ENCODE measurements at regions of chr20 and their contacts with region 1.

Region 1: DNA sequence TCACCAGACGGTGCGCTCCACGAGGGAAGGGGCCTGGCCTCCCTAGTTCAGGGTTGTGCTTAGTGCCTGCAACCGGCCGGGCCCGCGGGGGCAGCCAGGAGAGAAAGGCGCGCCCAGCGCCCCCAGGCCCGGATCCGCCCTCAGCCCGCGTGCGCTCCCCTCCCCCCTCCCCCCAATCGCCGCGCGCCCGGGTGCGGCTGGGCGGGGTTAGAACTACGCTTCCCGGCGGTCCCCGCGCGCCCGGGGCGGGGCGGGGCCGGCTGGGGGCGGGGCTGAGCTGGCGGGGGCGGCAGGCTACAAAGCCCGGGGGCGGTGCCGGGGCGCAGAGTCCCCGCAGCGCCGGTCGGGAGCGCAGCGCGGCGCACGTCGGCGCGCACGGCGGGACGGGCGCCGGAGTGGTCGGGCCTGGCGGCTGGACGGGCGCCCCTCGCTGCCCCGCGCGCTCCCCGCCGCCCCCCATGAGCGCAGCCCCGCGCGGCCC is at the start of gene RBM38:
- DNase-seq: peak; percentile 50 to 86 (median 74)
- ATAC-seq: peak; percentile 54
- H3K4me3 ChIP-seq: peak within 1 kb of the TSS; percentile 97 to 98
- H3K4me3 Mint-ChIP-seq: peak within 1 kb of the TSS; percentile 99
- H3K27ac ChIP-seq: peak within 1 kb of the TSS; percentile 90 to 97
- H3K27ac Mint-ChIP-seq: peak within 1 kb of the TSS; percentile 98
- H3K4me1 ChIP-seq: peaks cover 53% of the 10 kb centered on the region
- H3K4me1 Mint-ChIP-seq: peaks cover 45% of the 10 kb centered on the region
- H3K27me3 ChIP-seq: no peaks in the 10 kb centered on the region
- H3K27me3 Mint-ChIP-seq: no peaks in the 10 kb centered on the region
- CTCF ChIP-seq: no peak
- total RNA-seq, gene RBM38: 739 to 743 TPM

Region 2: DNA sequence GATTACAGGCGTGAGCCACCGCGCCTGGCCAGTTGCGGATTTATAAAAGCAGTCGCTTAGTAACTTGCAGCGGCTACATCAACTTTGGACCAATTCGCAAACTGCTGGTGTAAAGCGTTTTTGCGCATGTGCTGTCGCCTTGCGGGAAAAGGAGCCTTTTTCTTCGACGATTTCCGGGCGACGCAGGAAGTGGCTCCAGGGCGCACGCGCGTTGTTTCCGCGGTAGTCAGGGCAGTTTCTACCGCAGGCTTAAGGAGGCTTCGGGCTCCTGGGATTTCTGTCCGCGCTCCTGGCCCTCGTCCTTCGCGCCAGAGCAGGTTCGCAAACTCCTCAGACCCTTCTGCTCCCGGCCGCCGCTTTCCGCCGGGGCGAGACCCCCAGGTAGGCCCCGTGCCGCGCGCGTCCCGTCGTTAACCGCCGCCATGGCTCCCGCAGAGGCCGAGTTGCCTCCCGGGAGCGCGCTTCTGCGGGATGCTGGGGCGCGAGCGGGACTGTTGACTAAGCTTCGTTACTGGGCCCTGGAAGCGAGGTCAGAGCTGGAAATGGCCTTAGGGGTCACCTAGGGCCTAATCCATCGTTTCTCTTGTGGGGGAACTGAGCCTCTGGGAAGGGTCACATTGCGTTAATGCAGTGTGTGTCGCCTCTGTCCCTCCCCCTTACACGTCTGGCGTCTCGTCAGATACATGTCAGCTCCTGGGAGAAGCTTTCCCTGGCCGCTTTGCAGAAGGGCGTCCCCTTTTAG is 39.9 kb before region 1 on chr20 and contains the start of gene RAE1:
- CTCF ChIA-PET with region 1: interaction called, 5 read pairs
- POLR2A ChIA-PET with region 1: no interaction called
- intact Hi-C with region 1: loop called in 1 of 2 experiments (anchors 2 kb)
- DNase-seq: peak; percentile 80 to 97 (median 92)
- ATAC-seq: peak; percentile 86
- H3K4me3 ChIP-seq: peak within 1 kb of the TSS; percentile 78 to 97
- H3K4me3 Mint-ChIP-seq: peak within 1 kb of the TSS; percentile 90
- H3K27ac ChIP-seq: peak within 1 kb of the TSS; percentile 78 to 84
- H3K27ac Mint-ChIP-seq: peak within 1 kb of the TSS; percentile 92
- H3K4me1 ChIP-seq: peaks cover 23% of the 10 kb centered on the region
- H3K4me1 Mint-ChIP-seq: peaks cover 27% of the 10 kb centered on the region
- H3K27me3 ChIP-seq: no peaks in the 10 kb centered on the region
- H3K27me3 Mint-ChIP-seq: no peaks in the 10 kb centered on the region
- CTCF ChIP-seq: no peak
- total RNA-seq, gene RAE1: 58.9 to 59.4 TPM

Region 3: GRCh38 chr20:57672159-57672558 is 281.0 kb after region 1 on chr20:
- CTCF ChIA-PET with region 1: no interaction called
- POLR2A ChIA-PET with region 1: no interaction called
- intact Hi-C with region 1: no loop called
- DNase-seq: peak in 1 of 9 experiments; percentile 27
- ATAC-seq: no peak
- H3K4me3 ChIP-seq: no peak overlapping the region
- H3K4me3 Mint-ChIP-seq: no peak overlapping the region
- H3K27ac ChIP-seq: no peak overlapping the region
- H3K27ac Mint-ChIP-seq: no peak overlapping the region
- H3K4me1 ChIP-seq: peaks cover 15% of the 10 kb centered on the region
- H3K4me1 Mint-ChIP-seq: peaks cover 22% of the 10 kb centered on the region
- H3K27me3 ChIP-seq: no peaks in the 10 kb centered on the region
- H3K27me3 Mint-ChIP-seq: no peaks in the 10 kb centered on the region
- CTCF ChIP-seq: no peak

Region 4: DNA sequence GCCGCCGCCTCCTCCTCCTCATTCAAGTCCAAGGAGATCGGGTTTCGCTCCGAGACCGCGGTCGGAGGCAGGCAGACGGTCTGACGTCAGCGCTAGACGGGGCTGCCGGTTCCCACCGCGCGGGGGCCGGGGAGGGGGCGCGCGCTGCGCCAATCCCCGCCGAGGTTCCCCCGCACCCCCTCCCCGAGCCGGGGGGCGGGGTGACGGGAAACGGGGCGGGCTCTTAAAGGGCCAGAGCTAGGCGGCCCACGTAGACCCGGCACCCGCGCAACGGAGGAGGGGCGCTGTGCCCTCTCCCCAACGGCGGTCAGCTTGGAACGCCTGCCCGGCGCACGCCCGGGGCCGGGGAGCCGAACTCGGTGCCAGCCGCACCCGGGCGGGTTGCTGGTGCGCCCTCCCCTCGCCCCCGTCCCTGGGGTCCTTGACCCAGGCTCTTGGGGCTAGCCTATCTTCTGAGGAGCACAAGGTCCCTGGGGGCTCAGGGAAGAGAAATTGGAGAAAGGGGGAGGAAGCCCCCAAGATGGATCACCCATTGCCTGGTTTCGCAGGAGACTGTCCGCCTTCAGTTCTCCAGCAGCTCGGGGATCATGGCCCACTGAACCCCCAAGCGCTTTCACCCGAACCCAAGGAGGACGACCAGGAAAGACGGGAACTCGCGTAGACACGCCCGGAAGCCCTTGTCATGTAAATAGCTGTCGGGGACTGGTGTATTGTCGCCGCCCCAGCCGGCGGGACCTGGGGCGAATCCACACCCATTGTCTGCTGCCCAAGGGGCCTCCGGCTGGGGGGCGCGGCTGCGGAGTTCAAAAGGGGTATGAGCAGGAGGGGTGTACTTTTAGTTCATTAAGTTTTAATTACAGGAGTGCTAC is 319.1 kb after region 1 on chr20 and contains the start of gene PMEPA1:
- CTCF ChIA-PET with region 1: no interaction called
- POLR2A ChIA-PET with region 1: interaction called, 3 read pairs
- intact Hi-C with region 1: loop called (anchors 5 to 10 kb)
- DNase-seq: peak; percentile 87 to 97 (median 91)
- ATAC-seq: peak; percentile 86
- H3K4me3 ChIP-seq: peak within 1 kb of the TSS; percentile 64 to 99
- H3K4me3 Mint-ChIP-seq: peak within 1 kb of the TSS; percentile 92
- H3K27ac ChIP-seq: peak within 1 kb of the TSS; percentile 48 to 78
- H3K27ac Mint-ChIP-seq: peak within 1 kb of the TSS; percentile 96
- H3K4me1 ChIP-seq: peaks cover 32% of the 10 kb centered on the region
- H3K4me1 Mint-ChIP-seq: peaks cover 33% of the 10 kb centered on the region
- H3K27me3 ChIP-seq: peaks cover 0 to 12% of the 10 kb centered on the region in 2 experiments
- H3K27me3 Mint-ChIP-seq: no peaks in the 10 kb centered on the region
- CTCF ChIP-seq: no peak
- total RNA-seq, gene PMEPA1: 22.2 to 22.4 TPM

Region 5: GRCh38 chr20:58309575-58310290 is 918.6 kb after region 1 on chr20 and contains the start of gene RAB22A:
- CTCF ChIA-PET with region 1: no interaction called
- POLR2A ChIA-PET with region 1: no interaction called
- intact Hi-C with region 1: loop called in 1 of 2 experiments (anchors 2 kb)
- DNase-seq: peak; percentile 55 to 92 (median 82)
- ATAC-seq: peak; percentile 61
- H3K4me3 ChIP-seq: peak within 1 kb of the TSS; percentile 72 to 77
- H3K4me3 Mint-ChIP-seq: peak within 1 kb of the TSS; percentile 91
- H3K27ac ChIP-seq: peak within 1 kb of the TSS; percentile 71 to 84
- H3K27ac Mint-ChIP-seq: peak within 1 kb of the TSS; percentile 96
- H3K4me1 ChIP-seq: peaks cover 61% of the 10 kb centered on the region
- H3K4me1 Mint-ChIP-seq: peaks cover 62% of the 10 kb centered on the region
- H3K27me3 ChIP-seq: no peaks in the 10 kb centered on the region
- H3K27me3 Mint-ChIP-seq: no peaks in the 10 kb centered on the region
- CTCF ChIP-seq: no peak
- total RNA-seq, gene RAB22A: 19.0 to 22.8 TPM

Region 6: DNA sequence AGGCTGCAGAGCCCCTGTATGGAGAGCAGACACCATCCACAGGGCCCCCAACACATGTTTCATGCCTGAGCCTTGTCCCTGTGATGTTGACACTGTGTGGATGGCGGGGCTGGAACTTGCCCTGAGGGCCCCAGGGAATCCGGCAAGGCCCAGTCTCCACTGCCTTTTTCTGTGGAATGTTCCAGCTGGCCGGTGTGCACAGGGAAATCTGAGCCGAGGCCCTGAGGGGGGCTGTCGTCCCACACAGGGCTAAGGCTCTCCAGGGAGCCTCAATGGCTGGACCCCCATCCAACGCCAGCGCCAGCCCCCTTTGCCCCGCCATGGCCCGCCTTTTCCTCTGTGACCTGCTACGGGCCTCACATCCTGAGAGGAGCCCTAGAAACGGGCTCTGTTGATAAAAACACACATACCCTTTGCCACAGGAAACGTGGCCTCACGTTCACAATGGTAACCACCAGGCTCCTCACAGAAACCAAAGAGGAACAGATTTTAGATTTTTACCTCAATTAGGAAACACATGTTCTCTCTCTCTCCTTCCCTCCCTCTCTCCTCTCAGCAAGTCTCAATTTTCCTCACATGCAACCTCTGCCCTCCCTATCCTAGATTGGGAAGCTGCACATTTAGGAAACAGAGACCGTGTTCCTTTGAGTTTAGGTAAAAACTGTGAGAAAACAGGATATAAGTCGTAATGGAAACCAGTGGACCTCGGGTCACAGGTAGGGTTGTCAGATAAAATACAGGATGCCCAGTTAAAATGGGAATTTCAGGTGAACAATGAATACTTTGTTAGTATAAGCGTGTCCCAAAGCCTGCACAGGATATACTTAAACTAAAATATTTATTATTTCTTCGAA is 1758.8 kb after region 1 on chr20:
- CTCF ChIA-PET with region 1: no interaction called
- POLR2A ChIA-PET with region 1: no interaction called
- intact Hi-C with region 1: loop called in 1 of 2 experiments (anchors 10 kb)
- DNase-seq: peak; percentile 66 to 96 (median 77)
- ATAC-seq: peak; percentile 74
- H3K4me3 ChIP-seq: peak overlapping the region in 1 of 2 experiments; percentile 21
- H3K4me3 Mint-ChIP-seq: peak overlapping the region; percentile 71
- H3K27ac ChIP-seq: peak overlapping the region; percentile 90 to 94
- H3K27ac Mint-ChIP-seq: peak overlapping the region; percentile 95
- H3K4me1 ChIP-seq: peaks cover 94% of the 10 kb centered on the region
- H3K4me1 Mint-ChIP-seq: peaks cover 94% of the 10 kb centered on the region
- H3K27me3 ChIP-seq: no peaks in the 10 kb centered on the region
- H3K27me3 Mint-ChIP-seq: no peaks in the 10 kb centered on the region
- CTCF ChIP-seq: no peak